ENCODE measurements at regions of chr3 and their contacts with region 1.

Region 1: GRCh38 chr3:14921078-14921616 is 26.2 kb upstream of the NR2C2 start:
- DNase-seq: no peak
- H3K4me3 ChIP-seq: no peak overlapping the region
- H3K27ac ChIP-seq: no peak overlapping the region
- H3K4me1 ChIP-seq: peaks cover 6% of the 10 kb centered on the region
- H3K27me3 ChIP-seq: no peaks in the 10 kb centered on the region
- CTCF ChIP-seq: peak; percentile 96 to 100 (median 99)
- POLR2A ChIP-seq: no peak

Region 2: DNA sequence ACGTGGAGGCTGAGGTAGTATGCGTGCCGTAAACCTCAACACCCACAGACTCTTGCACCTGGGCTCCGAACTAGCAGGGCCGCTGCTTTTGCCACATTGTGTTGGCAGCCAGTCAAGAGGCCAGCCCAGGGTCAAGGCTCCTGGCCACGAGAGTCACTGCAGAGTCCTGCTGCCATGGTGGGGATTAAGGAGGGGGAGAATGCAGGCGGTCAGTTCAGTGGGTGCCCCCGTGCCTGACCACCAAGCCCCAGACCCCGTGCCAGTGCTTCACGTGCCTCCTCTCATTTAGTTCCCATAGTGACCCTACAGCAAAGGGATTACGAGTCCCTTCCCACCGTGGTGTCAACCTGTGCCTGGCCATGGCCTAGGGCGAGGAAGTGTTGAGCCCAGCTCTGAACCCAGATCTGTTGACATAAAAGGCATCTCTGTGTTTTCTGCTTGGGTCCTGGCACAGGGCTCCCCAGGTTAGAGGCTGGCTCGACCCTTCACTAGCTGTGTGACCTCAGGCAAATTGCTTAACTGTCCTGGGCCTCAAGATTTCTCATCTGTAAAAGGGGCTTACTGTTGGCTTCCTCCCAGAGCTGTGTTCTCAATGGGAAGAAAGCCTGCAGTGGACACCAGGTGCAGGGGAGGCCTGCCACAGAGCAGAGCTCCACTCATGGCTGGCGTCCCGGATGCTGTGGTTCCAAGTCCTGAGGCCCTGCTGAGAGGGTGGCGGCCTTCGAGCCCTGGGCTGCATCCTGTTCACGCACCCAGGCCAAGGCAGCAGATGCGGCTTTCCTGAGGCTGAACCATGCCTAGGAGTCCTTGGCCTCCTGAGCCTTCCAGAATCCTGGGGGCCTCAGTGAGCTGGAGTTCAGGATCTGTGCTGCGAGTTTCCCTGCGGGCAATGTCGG is 1339.4 kb before region 1 on chr3:
- intact Hi-C with region 1: no loop called
- DNase-seq: no peak
- H3K4me3 ChIP-seq: no peak overlapping the region
- H3K27ac ChIP-seq: peak overlapping the region; percentile 68
- H3K4me1 ChIP-seq: peaks cover 49% of the 10 kb centered on the region
- H3K27me3 ChIP-seq: no peaks in the 10 kb centered on the region
- CTCF ChIP-seq: no peak
- POLR2A ChIP-seq: no peak

Region 3: DNA sequence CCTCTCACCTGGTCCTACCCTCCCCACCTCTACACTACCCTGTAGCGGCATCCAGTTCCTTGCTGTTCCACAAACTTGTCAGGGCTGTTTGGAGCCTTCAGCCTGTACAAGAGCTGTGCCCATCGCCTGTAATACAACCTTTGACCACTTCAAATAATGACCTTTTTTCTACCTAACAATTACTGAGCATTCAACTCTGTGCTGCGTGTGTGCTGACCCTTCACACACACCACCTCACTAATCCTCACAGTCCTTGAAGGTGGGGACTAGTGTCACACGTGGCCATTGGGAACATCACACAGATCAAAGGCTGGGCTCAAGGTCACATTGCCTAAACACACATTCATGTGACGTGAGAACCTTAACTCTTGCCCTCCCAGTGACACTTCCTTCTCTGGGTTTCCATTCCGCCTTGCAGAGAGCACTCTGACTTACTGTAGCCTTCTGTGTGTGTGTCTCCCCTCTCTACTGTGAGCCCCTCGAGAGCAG is 243.1 kb before region 1 on chr3:
- intact Hi-C with region 1: loop called (anchors 5 kb)
- DNase-seq: no peak
- H3K4me3 ChIP-seq: no peak overlapping the region
- H3K27ac ChIP-seq: no peak overlapping the region
- H3K4me1 ChIP-seq: no peaks in the 10 kb centered on the region
- H3K27me3 ChIP-seq: no peaks in the 10 kb centered on the region
- CTCF ChIP-seq: no peak
- POLR2A ChIP-seq: no peak

Region 4: DNA sequence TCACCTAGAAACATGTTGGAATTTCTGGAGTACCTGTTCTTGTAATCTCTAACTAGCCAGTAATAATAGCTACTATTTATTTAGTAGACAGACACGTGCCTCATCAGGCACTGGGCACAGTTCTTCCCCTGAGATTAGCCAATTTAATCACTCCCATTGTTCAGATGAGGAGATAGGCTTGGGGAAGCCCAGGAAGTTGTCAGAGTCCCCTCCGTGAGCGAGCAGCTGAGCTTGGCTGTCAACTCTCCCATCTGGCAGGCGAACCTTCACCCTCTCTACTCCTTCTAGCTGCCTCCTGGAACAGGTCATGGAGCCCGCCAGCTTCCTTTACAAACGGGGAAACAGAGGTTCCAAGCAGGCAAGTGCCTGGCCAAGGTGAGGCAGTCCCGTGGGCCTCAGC is 133.5 kb before region 1 on chr3:
- intact Hi-C with region 1: loop called (anchors 5 kb)
- DNase-seq: no peak
- H3K4me3 ChIP-seq: no peak overlapping the region
- H3K27ac ChIP-seq: no peak overlapping the region
- H3K4me1 ChIP-seq: peaks cover 2% of the 10 kb centered on the region
- H3K27me3 ChIP-seq: no peaks in the 10 kb centered on the region
- CTCF ChIP-seq: no peak
- POLR2A ChIP-seq: no peak

Region 5: GRCh38 chr3:14890476-14890875 is 30.7 kb before region 1 on chr3:
- intact Hi-C with region 1: no loop called
- DNase-seq: no peak
- H3K4me3 ChIP-seq: no peak overlapping the region
- H3K27ac ChIP-seq: no peak overlapping the region
- H3K4me1 ChIP-seq: no peaks in the 10 kb centered on the region
- H3K27me3 ChIP-seq: no peaks in the 10 kb centered on the region
- CTCF ChIP-seq: no peak
- POLR2A ChIP-seq: no peak

Region 6: GRCh38 chr3:15578289-15578867 is 657.2 kb after region 1 on chr3:
- intact Hi-C with region 1: no loop called
- DNase-seq: no peak
- H3K4me3 ChIP-seq: no peak overlapping the region
- H3K27ac ChIP-seq: no peak overlapping the region
- H3K4me1 ChIP-seq: no peaks in the 10 kb centered on the region
- H3K27me3 ChIP-seq: no peaks in the 10 kb centered on the region
- CTCF ChIP-seq: no peak
- POLR2A ChIP-seq: no peak

Measured in vagina (tissue), 2 donors.